ENCODE measurements at regions of chr18 and their contacts with region 1.

Region 1: GRCh38 chr18:12534820-12535219 is 123.1 kb downstream of the SPIRE1 start:
- DNase-seq: no peak
- H3K4me3 ChIP-seq: no peak overlapping the region
- H3K27ac ChIP-seq: no peak overlapping the region
- H3K4me1 ChIP-seq: no peaks in the 10 kb centered on the region
- H3K27me3 ChIP-seq: no peaks in the 10 kb centered on the region
- CTCF ChIP-seq: no peak
- POLR2A ChIP-seq: no peak

Region 2: DNA sequence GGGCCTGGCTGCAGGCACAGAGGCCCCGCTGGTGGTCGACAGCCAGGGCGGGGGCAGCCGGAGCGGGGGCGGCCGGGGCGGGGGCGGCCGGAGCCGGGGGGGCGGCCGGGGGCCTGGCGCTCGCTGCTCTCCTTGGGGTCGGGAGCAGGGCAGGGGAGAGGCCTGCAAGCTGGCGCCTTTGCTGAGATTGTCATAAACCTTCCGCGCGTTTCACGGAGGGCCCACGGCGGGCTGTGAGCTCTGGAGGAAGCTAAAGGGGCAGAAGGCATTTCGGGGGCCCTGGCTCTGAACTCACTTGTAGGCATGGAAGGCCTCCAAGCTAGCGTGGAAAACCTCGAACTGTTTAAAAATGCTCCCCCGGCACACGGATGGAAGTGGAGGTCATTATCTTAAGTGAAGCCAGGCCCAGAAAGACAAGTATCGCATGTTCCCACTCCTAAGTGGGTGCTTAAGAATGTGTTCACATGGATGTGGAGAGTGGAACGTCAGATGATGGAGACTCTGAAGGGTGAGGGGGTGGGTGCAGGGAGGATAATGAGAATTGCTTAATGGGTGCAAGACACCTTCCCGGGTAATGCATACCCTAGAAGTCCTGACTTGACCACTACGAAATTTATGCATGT is 126.5 kb before region 1 on chr18:
- intact Hi-C with region 1: no loop called
- DNase-seq: peak; percentile 28 to 51
- H3K4me3 ChIP-seq: peak overlapping the region in 2 of 3 donors; percentile 16 to 45
- H3K27ac ChIP-seq: peak overlapping the region; percentile 66 to 83 (median 73)
- H3K4me1 ChIP-seq: peaks cover 3 to 19% of the 10 kb centered on the region in 2 donors
- H3K27me3 ChIP-seq: no peaks in the 10 kb centered on the region
- CTCF ChIP-seq: no peak
- POLR2A ChIP-seq: no peak

Region 3: GRCh38 chr18:12659904-12660605 is 125.2 kb after region 1 on chr18:
- intact Hi-C with region 1: loop called (anchors 5 kb)
- DNase-seq: peak; percentile 52 to 56
- H3K4me3 ChIP-seq: no peak overlapping the region
- H3K27ac ChIP-seq: no peak overlapping the region
- H3K4me1 ChIP-seq: peaks cover 0 to 5% of the 10 kb centered on the region in 2 donors
- H3K27me3 ChIP-seq: no peaks in the 10 kb centered on the region
- CTCF ChIP-seq: peak; percentile 69 to 95 (median 87)
- POLR2A ChIP-seq: no peak

Region 4: DNA sequence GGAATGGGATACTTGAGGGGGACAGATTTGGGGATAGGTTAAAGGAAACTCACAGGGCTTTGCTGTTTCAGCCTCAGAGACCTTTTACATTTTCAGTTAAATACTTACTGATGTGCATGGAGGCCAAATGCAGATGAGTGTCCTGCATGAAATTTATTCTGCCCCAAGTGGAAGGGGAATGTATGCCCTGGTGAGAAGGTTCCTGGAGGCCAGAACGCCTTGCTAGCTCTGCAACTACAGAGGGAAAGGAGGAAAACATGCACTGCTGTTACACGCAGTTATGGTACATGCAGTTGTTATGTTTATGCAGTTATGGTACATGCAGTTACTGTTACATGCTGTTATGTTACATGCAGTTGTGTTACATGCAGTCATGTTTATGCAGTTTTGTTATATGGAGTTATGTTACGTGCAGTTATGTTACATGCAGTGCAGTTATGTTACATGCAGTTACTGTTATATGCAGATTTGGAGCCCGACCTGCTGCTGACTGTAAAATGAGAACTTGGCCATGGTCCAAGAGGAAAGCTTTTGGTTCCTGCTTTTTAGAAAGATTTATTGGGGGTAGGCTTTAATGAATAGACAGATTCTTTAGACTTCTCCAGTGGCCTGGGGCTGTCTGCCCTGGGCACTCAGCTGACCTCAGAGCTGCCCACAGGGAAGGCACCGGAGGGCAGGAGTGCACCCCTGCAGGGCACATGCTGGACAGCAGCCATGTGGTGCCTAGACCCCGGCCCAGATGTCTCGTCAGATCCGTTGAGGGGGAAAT is 767.8 kb after region 1 on chr18:
- intact Hi-C with region 1: no loop called
- DNase-seq: no peak
- H3K4me3 ChIP-seq: no peak overlapping the region
- H3K27ac ChIP-seq: no peak overlapping the region
- H3K4me1 ChIP-seq: no peaks in the 10 kb centered on the region
- H3K27me3 ChIP-seq: no peaks in the 10 kb centered on the region
- CTCF ChIP-seq: no peak
- POLR2A ChIP-seq: no peak

Measured in thyroid gland (tissue), 4 donors.